Panc1 (cell line): ENCODE measurements at regions of chr21 and their contacts with region 1.

Region 1: DNA sequence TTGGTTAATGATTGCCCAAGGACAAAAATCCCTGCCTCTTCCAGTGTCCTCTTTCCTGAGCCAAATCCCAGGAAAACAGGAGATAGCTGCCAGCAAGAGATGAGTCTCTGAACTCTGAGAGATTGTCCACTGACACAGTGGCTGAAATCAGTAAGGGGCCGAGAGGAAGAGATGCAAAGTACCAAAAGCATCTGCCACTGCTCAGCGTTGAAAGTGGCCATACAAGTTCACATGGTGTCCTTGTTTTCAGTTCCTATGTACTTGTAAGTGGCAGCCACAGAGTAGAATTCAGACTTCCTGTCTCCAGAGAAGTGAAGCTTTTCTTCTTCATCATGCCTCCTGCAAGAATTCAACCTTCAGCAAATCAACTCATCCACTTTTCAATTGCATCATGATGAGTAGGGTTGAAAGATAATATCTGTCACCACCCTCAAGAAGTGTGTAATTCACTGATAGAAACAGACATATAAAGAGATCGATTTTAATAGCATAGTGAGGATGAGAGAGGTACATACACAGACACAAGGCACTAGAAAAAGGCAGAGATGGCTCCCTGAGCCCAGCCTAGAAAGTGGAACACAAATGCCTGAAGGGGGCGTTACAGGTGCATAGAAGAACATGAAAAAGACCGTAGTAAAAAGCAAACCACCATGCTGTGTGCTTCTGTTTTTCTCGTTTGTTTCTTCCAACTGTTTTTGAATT is 185.8 kb downstream of the MRPL39 start:
- DNase-seq: peak; percentile 30
- ATAC-seq: 0 out of 2 replicates have a peak, but pooled peaks have one; percentile 62
- H3K4me3 ChIP-seq: no peak overlapping the region
- H3K27ac ChIP-seq: no peak overlapping the region
- H3K4me1 ChIP-seq: no peaks in the 10 kb centered on the region
- H3K27me3 ChIP-seq: no peaks in the 10 kb centered on the region
- CTCF ChIP-seq: peak; percentile 58

Region 2: GRCh38 chr21:25234857-25235801 is 186.3 kb before region 1 on chr21:
- CTCF ChIA-PET with region 1: no interaction called
- POLR2A ChIA-PET with region 1: no interaction called
- in situ Hi-C with region 1: no loop called
- intact Hi-C with region 1: no loop called
- DNase-seq: no peak
- ATAC-seq: no peak
- H3K4me3 ChIP-seq: no peak overlapping the region
- H3K27ac ChIP-seq: no peak overlapping the region
- H3K4me1 ChIP-seq: no peaks in the 10 kb centered on the region
- H3K27me3 ChIP-seq: no peaks in the 10 kb centered on the region
- CTCF ChIP-seq: no peak

Region 3: DNA sequence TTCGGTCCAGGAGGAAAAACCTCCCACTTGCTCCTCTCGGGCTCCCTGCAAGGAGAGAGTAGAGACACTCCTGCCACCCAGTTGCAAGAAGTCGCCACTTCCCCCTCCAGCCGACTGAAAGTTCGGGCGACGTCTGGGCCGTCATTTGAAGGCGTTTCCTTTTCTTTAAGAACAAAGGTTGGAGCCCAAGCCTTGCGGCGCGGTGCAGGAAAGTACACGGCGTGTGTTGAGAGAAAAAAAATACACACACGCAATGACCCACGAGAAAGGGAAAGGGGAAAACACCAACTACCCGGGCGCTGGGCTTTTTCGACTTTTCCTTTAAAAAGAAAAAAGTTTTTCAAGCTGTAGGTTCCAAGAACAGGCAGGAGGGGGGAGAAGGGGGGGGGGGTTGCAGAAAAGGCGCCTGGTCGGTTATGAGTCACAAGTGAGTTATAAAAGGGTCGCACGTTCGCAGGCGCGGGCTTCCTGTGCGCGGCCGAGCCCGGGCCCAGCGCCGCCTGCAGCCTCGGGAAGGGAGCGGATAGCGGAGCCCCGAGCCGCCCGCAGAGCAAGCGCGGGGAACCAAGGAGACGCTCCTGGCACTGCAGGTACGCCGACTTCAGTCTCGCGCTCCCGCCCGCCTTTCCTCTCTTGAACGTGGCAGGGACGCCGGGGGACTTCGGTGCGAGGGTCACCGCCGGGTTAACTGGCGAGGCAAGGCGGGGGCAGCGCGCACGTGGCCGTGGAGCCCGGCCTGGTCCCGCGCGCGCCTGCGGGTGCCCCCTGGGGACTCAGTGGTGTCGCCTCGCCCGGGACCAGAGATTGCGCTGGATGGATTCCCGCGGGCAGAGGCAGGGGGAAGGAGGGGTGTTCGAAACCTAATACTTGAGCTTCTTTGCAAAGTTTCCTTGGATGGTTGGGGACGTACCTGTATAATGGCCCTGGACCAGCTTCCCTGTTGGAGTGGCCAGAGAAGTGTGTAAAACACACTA is 140.5 kb after region 1 on chr21:
- CTCF ChIA-PET with region 1: no interaction called
- POLR2A ChIA-PET with region 1: no interaction called
- in situ Hi-C with region 1: no loop called
- intact Hi-C with region 1: loop called (anchors 10 kb)
- DNase-seq: no peak
- ATAC-seq: peak; percentile 91
- H3K4me3 ChIP-seq: peak overlapping the region; percentile 34 to 48
- H3K27ac ChIP-seq: no peak overlapping the region
- H3K4me1 ChIP-seq: 0 out of 2 replicates have a peak, but pooled peaks cover 2% of the 10 kb centered on the region
- H3K27me3 ChIP-seq: no peaks in the 10 kb centered on the region
- CTCF ChIP-seq: peak; percentile 31